ENCODE measurements at regions of chr5 and their contacts with region 1.

Region 1: DNA sequence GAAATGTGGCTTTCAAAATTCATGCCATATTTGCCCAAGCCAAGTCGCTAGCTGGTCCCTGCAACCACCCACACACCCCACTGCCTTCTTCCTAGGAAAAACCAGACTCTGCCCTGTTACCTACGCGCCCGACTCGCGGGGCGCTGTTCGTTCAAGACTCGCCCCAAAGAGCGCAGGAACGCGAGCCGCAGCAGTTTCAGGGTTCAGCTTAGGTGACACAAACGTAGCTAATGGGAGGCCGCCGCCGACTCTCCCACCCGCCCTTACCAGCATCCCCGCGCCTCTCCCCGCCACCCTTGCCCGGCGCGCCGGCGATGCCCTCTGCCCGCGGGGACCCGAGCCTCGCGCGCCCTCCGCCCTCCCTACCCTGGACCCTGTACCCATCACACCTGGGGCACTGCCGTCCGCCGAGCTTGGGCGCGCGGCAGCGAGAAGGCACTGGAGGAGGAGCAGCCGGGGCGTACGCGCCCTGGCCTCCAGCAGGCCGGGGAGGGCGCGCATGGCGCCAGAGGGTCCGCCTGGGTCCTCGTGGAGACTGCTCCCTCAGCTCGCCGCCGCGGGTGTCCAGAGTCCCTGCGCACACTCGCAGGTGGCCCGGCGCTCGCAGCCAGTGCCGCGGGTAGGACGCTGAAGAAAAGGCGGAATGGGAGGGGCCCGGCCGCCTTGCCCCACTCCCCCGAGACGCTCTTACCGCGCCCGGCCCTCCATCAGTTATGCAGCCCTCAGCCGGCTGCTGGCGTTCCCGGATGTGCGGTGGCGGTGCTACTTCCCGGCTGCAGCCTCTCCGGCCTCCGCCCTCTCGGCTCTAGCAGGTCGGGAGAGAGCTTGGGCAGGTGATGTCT is at the start of gene EMB:
- DNase-seq: peak; percentile 65 to 88 (median 79)
- ATAC-seq: peak; percentile 80
- H3K4me3 ChIP-seq: peak within 1 kb of the TSS; percentile 73
- H3K4me3 Mint-ChIP-seq: peak within 1 kb of the TSS; percentile 88 to 99 (median 94)
- H3K27ac ChIP-seq: peak within 1 kb of the TSS; percentile 89
- H3K27ac Mint-ChIP-seq: peak within 1 kb of the TSS; percentile 96 to 99 (median 97)
- H3K4me1 ChIP-seq: peaks cover 36 to 44% of the 10 kb centered on the region in 2 donors
- H3K4me1 Mint-ChIP-seq: peaks cover 40 to 88% (median 74%) of the 10 kb centered on the region in 7 donors
- H3K27me3 ChIP-seq: no peaks in the 10 kb centered on the region
- H3K27me3 Mint-ChIP-seq: no peaks in the 10 kb centered on the region
- total RNA-seq, gene EMB: 124 to 169 (median 159) TPM

Region 2: DNA sequence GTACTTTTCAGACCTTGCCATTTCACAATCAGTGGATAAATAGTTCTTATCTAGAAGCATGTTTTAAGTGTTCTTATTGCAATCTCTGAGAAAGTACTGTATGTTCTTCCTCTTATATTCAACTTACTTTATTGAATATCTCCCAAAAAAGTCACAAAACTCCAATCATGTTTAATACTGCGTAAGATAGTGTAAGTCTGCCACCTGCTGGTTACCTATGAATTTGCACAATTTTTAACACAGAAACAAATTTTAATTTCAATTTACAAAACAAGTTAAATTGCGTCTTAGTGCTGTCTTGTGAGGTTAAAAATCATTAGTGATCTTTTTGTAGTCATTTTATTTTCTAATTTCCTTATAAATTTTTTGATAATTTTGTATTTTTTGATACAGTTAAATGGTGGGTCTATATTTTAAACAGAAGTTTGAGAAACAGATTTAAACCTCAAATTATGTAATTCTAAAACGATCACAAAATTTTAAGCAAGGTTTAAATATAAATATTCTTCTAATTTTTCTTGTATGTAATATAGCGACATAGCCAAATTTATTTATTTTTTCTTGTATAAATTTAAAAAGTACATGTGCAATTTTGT is 115.5 kb before region 1 on chr5:
- CTCF ChIA-PET with region 1: no interaction called
- POLR2A ChIA-PET with region 1: no interaction called
- intact Hi-C with region 1: loop called in 1 of 2 experiments (anchors 2 kb)
- DNase-seq: peak in 5 of 9 donors; percentile 2 to 33 (median 29)
- ATAC-seq: peak; percentile 42
- H3K4me3 ChIP-seq: no peak overlapping the region
- H3K4me3 Mint-ChIP-seq: no peak overlapping the region
- H3K27ac ChIP-seq: no peak overlapping the region
- H3K27ac Mint-ChIP-seq: no peak overlapping the region
- H3K4me1 ChIP-seq: peaks cover 0 to 9% of the 10 kb centered on the region in 2 donors
- H3K4me1 Mint-ChIP-seq: peaks cover 7 to 24% (median 16%) of the 10 kb centered on the region in 7 donors
- H3K27me3 ChIP-seq: no peaks in the 10 kb centered on the region
- H3K27me3 Mint-ChIP-seq: peaks cover 0 to 5% (median 0%) of the 10 kb centered on the region in 5 donors

Region 3: DNA sequence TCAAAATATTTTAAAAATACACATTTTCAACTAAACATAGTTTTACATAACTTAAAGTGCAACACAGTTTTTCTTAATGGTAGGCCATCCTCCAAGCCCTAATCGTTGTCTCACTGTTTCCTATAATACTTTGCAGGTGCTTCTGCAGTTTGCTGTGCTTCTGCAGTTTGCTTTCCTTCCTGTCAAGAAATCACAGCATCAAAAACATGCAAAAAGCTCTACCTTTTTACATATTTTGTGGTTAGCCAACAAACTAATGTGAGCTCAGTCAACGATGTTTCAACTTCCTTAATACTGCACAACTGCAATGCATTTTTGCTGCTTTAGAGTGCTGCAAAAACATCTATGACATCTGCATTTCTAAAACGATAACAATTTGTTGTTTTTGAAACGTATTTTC is 25.0 kb before region 1 on chr5:
- CTCF ChIA-PET with region 1: interaction called, 3 read pairs
- POLR2A ChIA-PET with region 1: interaction called, 6 read pairs
- intact Hi-C with region 1: loop called in 1 of 2 experiments (anchors 1 kb)
- DNase-seq: peak in 7 of 9 donors; percentile 57 to 85 (median 74)
- ATAC-seq: peak; percentile 86
- H3K4me3 ChIP-seq: no peak overlapping the region
- H3K4me3 Mint-ChIP-seq: peak overlapping the region in 7 of 10 donors; percentile 42 to 69 (median 60)
- H3K27ac ChIP-seq: peak overlapping the region; percentile 65
- H3K27ac Mint-ChIP-seq: peak overlapping the region in 8 of 9 donors; percentile 68 to 96 (median 93)
- H3K4me1 ChIP-seq: peaks cover 37 to 40% of the 10 kb centered on the region in 2 donors
- H3K4me1 Mint-ChIP-seq: peaks cover 49 to 97% (median 90%) of the 10 kb centered on the region in 7 donors
- H3K27me3 ChIP-seq: no peaks in the 10 kb centered on the region
- H3K27me3 Mint-ChIP-seq: no peaks in the 10 kb centered on the region

Region 4: GRCh38 chr5:50501491-50502228 is 60.8 kb after region 1 on chr5:
- CTCF ChIA-PET with region 1: no interaction called
- POLR2A ChIA-PET with region 1: interaction called, 8 read pairs
- intact Hi-C with region 1: loop called in 1 of 2 experiments (anchors 1 kb)
- DNase-seq: peak in 4 of 9 donors; percentile 3 to 15 (median 7)
- ATAC-seq: peak; percentile 79
- H3K4me3 ChIP-seq: no peak overlapping the region
- H3K4me3 Mint-ChIP-seq: peak overlapping the region in 9 of 10 donors; percentile 14 to 72 (median 67)
- H3K27ac ChIP-seq: no peak overlapping the region
- H3K27ac Mint-ChIP-seq: peak overlapping the region; percentile 45 to 89 (median 78)
- H3K4me1 ChIP-seq: peaks cover 0 to 6% of the 10 kb centered on the region in 2 donors
- H3K4me1 Mint-ChIP-seq: peaks cover 6 to 22% (median 14%) of the 10 kb centered on the region in 7 donors
- H3K27me3 ChIP-seq: no peaks in the 10 kb centered on the region
- H3K27me3 Mint-ChIP-seq: peaks cover 0 to 15% (median 0%) of the 10 kb centered on the region in 5 donors

Region 5: DNA sequence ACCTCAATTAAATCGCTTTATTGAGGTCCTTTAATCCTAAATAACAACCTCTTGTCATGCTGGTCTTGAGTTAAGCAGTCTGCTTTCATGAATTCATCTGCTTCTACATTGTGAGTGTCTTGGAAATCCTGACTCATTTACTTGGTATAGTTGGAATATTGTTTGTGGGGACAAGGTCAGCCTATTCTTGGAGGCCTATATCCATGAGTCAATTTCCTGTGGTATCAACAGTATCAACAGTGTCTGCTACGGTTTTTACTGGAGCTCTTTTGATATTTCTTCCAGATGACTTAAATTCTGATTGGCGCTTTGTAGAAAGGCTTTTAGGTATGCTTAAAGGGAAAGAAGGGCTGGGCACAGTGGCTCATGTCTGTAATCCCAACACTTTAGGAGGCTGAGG is 154.3 kb after region 1 on chr5:
- CTCF ChIA-PET with region 1: interaction called, 3 read pairs
- POLR2A ChIA-PET with region 1: no interaction called
- intact Hi-C with region 1: loop called (anchors 1 to 2 kb)
- DNase-seq: no peak
- ATAC-seq: no peak
- H3K4me3 ChIP-seq: no peak overlapping the region
- H3K4me3 Mint-ChIP-seq: no peak overlapping the region
- H3K27ac ChIP-seq: no peak overlapping the region
- H3K27ac Mint-ChIP-seq: peak overlapping the region in 2 of 9 donors; percentile 34
- H3K4me1 ChIP-seq: peaks cover 31 to 46% of the 10 kb centered on the region in 2 donors
- H3K4me1 Mint-ChIP-seq: peaks cover 23 to 54% (median 39%) of the 10 kb centered on the region in 7 donors
- H3K27me3 ChIP-seq: no peaks in the 10 kb centered on the region
- H3K27me3 Mint-ChIP-seq: no peaks in the 10 kb centered on the region

Region 6: GRCh38 chr5:50711273-50711672 is 270.4 kb after region 1 on chr5:
- CTCF ChIA-PET with region 1: no interaction called
- POLR2A ChIA-PET with region 1: interaction called, 6 read pairs
- intact Hi-C with region 1: loop called in 1 of 2 experiments (anchors 1 kb)
- DNase-seq: peak in 8 of 9 donors; percentile 48 to 82 (median 74)
- ATAC-seq: peak; percentile 94
- H3K4me3 ChIP-seq: peak overlapping the region; percentile 31
- H3K4me3 Mint-ChIP-seq: peak overlapping the region; percentile 78 to 89 (median 85)
- H3K27ac ChIP-seq: peak overlapping the region; percentile 76
- H3K27ac Mint-ChIP-seq: peak overlapping the region; percentile 82 to 98 (median 94)
- H3K4me1 ChIP-seq: peaks cover 40 to 72% of the 10 kb centered on the region in 2 donors
- H3K4me1 Mint-ChIP-seq: peaks cover 57 to 96% (median 87%) of the 10 kb centered on the region in 7 donors
- H3K27me3 ChIP-seq: no peaks in the 10 kb centered on the region
- H3K27me3 Mint-ChIP-seq: no peaks in the 10 kb centered on the region

Region 7: GRCh38 chr5:51286046-51286445 is 845.2 kb after region 1 on chr5:
- CTCF ChIA-PET with region 1: no interaction called
- POLR2A ChIA-PET with region 1: no interaction called
- intact Hi-C with region 1: no loop called
- DNase-seq: no peak
- ATAC-seq: no peak
- H3K4me3 ChIP-seq: no peak overlapping the region
- H3K4me3 Mint-ChIP-seq: no peak overlapping the region
- H3K27ac ChIP-seq: no peak overlapping the region
- H3K27ac Mint-ChIP-seq: no peak overlapping the region
- H3K4me1 ChIP-seq: no peaks in the 10 kb centered on the region
- H3K4me1 Mint-ChIP-seq: no peaks in the 10 kb centered on the region
- H3K27me3 ChIP-seq: no peaks in the 10 kb centered on the region
- H3K27me3 Mint-ChIP-seq: no peaks in the 10 kb centered on the region